ENCODE measurements at regions of chr7 and their contacts with region 1.

Region 1: GRCh38 chr7:55641273-55641691 is 69.0 kb upstream of the VOPP1 start:
- DNase-seq: peak in 3 of 5 donors; percentile 27 to 42 (median 30)
- ATAC-seq: peak; percentile 80 to 95 (median 91)
- H3K4me3 ChIP-seq: no peak overlapping the region
- H3K27ac ChIP-seq: no peak overlapping the region
- H3K4me1 ChIP-seq: peaks cover 0 to 7% (median 0%) of the 10 kb centered on the region in 12 donors
- H3K27me3 ChIP-seq: peaks cover 0 to 2% (median 0%) of the 10 kb centered on the region in 9 donors
- CTCF ChIP-seq: peak; percentile 61 to 85 (median 77)
- POLR2A ChIP-seq: no peak

Region 2: GRCh38 chr7:55400191-55400590 is 241.1 kb before region 1 on chr7:
- intact Hi-C with region 1: no loop called
- DNase-seq: no peak
- ATAC-seq: no peak
- H3K4me3 ChIP-seq: no peak overlapping the region
- H3K27ac ChIP-seq: no peak overlapping the region
- H3K4me1 ChIP-seq: no peaks in the 10 kb centered on the region
- H3K27me3 ChIP-seq: no peaks in the 10 kb centered on the region
- CTCF ChIP-seq: no peak
- POLR2A ChIP-seq: no peak

Region 3: GRCh38 chr7:55733241-55734140 is 92.2 kb after region 1 on chr7:
- intact Hi-C with region 1: loop called in 1 of 10 experiments (anchors 10 kb)
- DNase-seq: no peak
- ATAC-seq: no peak
- H3K4me3 ChIP-seq: no peak overlapping the region
- H3K27ac ChIP-seq: no peak overlapping the region
- H3K4me1 ChIP-seq: no peaks in the 10 kb centered on the region
- H3K27me3 ChIP-seq: no peaks in the 10 kb centered on the region
- CTCF ChIP-seq: no peak
- POLR2A ChIP-seq: no peak

Region 4: DNA sequence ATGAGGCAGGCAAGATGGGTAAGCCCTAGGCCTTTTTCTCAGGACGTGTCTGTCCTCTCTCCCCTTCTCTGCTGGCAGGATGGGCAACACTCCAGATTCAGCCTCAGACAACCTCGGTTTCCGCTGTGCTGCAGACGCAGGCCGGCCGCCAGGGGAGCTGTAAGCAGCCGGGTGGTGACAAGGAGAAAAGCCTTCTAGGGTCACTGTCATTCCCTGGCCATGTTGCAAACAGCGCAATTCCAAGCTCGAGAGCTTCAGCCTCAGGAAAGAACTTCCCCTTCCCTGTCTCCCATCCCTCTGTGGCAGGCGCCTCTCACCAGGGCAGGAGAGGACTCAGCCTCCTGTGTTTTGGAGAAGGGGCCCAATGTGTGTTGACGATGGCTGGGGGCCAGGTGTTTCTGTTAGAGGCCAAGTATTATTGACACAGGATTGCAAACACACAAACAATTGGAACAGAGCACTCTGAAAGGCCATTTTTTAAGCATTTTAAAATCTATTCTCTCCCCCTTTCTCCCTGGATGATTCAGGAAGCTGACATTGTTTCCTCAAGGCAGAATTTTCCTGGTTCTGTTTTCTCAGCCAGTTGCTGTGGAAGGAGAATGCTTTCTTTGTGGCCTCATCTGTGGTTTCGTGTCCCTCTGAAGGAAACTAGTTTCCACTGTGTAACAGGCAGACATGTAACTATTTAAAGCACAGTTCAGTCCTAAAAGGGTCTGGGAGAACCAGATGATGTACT is 438.3 kb after region 1 on chr7:
- intact Hi-C with region 1: loop called (anchors 2 to 10 kb)
- DNase-seq: peak; percentile 87 to 93 (median 90)
- ATAC-seq: peak; percentile 83 to 89 (median 86)
- H3K4me3 ChIP-seq: peak overlapping the region in 1 of 12 donors; percentile 10
- H3K27ac ChIP-seq: peak overlapping the region; percentile 56 to 96 (median 86)
- H3K4me1 ChIP-seq: peaks cover 10 to 43% (median 35%) of the 10 kb centered on the region in 12 donors
- H3K27me3 ChIP-seq: no peaks in the 10 kb centered on the region
- CTCF ChIP-seq: peak; percentile 49 to 96 (median 82)
- POLR2A ChIP-seq: peak in 1 of 2 donors; percentile 1

Region 5: DNA sequence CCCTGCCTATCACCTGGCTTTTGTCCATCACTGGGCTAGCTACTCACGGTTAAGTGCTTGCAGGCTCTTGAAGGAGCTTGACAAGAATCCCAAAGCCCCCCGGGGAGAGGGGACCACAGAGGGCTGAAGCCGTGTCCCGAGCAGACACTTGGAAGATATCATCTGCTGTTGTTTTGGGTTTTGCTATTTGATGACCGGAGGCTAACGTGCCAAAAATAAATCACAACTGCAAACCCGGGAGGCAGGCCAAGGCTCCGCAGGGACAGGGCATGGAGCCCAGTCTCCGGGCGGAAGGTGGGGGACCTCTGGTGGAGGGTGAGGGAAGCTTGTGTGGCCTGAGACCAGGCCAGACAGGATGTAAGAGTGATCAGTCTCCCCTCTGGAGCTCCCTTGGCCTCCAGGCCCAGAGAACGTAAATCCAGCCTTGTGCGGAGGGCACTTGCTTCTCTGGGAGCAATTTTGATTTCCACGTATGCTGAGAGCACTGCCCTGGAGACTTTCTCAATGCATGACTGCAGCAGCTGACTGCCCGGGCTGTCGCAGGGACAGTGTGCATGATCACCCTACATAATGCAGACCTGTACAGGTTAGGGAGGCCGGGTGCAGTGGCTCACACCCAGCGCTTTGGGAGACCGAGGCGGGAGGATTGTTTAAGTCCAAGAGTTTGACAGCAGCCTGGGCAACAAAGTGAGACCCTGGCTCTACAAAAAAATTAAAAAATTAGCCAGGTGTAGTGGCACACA is 451.7 kb after region 1 on chr7 and contains the start of gene PHKG1:
- intact Hi-C with region 1: loop called in 1 of 10 experiments (anchors 1 kb)
- DNase-seq: peak; percentile 86 to 90 (median 89)
- ATAC-seq: peak; percentile 81 to 93 (median 90)
- H3K4me3 ChIP-seq: peak within 1 kb of the TSS in 11 of 12 donors; percentile 25 to 56 (median 43)
- H3K27ac ChIP-seq: peak within 1 kb of the TSS; percentile 57 to 94 (median 85)
- H3K4me1 ChIP-seq: peaks cover 0 to 38% (median 18%) of the 10 kb centered on the region in 12 donors
- H3K27me3 ChIP-seq: no peaks in the 10 kb centered on the region
- CTCF ChIP-seq: peak; percentile 47 to 83 (median 72)
- POLR2A ChIP-seq: no peak
- total RNA-seq, gene PHKG1: 5.9 to 150 (median 19.9) TPM